WTC11 (cell line): ENCODE measurements at regions of chr12 and their contacts with region 1.

Region 1: GRCh38 chr12:99043319-99043914 is 398.3 kb downstream of the APAF1 start:
- DNase-seq: peak; percentile 77
- ATAC-seq: peak; percentile 65
- H3K4me3 Mint-ChIP-seq: no peak overlapping the region
- H3K27ac Mint-ChIP-seq: no peak overlapping the region
- H3K4me1 Mint-ChIP-seq: peaks cover 10% of the 10 kb centered on the region
- H3K27me3 Mint-ChIP-seq: no peaks in the 10 kb centered on the region; the same call in 1 of the 2 replicates
- CTCF ChIP-seq: peak; percentile 91

Region 2: DNA sequence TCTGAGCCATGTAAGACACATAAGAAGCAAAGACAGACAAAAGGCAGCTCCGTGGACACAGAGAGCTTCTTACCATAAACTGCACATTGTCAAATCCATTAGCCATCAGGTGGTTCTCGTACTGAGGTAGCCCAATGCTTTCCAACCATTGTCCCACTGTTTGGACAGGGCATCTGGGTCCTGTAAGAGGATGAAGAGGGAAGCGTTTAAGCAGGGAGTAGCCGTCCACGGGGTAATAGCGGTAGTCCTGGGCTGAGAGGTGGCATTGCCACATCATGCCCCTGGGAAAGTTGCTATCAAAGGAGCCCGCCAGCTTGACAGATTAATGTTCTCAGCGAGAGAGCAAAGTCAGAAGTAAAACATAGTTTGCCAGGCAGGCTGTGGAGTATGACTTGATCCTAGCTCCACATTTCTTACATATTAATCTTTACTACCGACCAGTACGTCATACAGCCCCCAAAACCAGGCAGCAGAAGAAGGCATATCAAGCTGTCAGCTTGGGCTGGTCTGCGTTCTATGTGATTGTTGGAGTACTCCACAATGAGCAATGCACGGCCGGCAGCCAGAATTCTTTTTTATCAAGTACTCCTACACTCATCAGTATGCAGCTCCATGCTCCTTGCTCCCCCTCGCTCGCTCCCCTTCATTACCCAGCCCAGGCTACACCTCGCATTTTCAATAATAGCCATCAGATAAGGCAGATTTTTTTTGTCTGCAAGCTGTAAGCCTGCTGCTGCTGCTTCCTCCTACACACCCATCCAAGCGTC is 111.0 kb after region 1 on chr12:
- CTCF ChIA-PET with region 1: interaction called, 15 read pairs
- POLR2A ChIA-PET with region 1: no interaction called
- DNase-seq: peak; percentile 11
- ATAC-seq: peak; percentile 85
- H3K4me3 Mint-ChIP-seq: peak overlapping the region; percentile 53
- H3K27ac Mint-ChIP-seq: peak overlapping the region; percentile 91
- H3K4me1 Mint-ChIP-seq: peaks cover 42% of the 10 kb centered on the region
- H3K27me3 Mint-ChIP-seq: no peaks in the 10 kb centered on the region
- CTCF ChIP-seq: no peak

Region 3: GRCh38 chr12:99287136-99287535 is 243.7 kb after region 1 on chr12:
- CTCF ChIA-PET with region 1: interaction called, 20 read pairs
- POLR2A ChIA-PET with region 1: no interaction called
- DNase-seq: no peak
- ATAC-seq: peak; percentile 76
- H3K4me3 Mint-ChIP-seq: no peak overlapping the region
- H3K27ac Mint-ChIP-seq: no peak overlapping the region
- H3K4me1 Mint-ChIP-seq: peaks cover 4% of the 10 kb centered on the region; the same call in 1 of the 2 replicates
- H3K27me3 Mint-ChIP-seq: no peaks in the 10 kb centered on the region
- CTCF ChIP-seq: no peak